Ovary (tissue), 10 donors: ENCODE measurements at regions of chr20 and their contacts with region 1.

Region 1: DNA sequence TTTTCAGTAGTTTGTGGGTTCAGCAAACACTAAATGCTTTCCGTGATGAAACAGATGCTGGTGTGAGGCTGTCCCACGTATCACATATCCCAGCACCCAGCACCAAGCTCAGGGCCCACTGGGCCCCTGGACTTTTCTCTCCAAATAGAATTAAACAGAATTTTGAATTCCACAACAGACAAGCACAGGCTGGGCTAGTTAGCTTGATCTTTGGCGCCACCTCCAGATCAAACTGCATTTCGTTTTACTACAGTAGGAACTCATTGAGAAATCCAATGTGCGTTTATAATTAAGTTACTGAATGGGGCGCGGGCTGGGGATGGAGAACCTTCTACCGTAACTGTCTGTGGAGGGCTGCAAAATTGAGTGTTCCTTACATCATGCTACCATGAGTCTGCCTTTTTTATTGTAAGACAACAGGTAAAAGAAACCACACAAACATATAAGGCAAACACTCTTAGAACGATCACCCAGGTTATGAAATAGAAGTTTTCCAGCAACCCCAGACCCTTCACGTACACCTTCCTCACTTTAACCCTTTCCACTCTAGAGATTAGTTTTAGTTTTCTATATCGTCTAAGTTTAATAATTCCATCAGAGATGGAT is 107.8 kb downstream of the ZFP64 start:
- DNase-seq: peak; percentile 54 to 69 (median 61)
- H3K4me3 ChIP-seq: no peak overlapping the region
- H3K27ac ChIP-seq: no peak overlapping the region
- H3K4me1 ChIP-seq: no peaks in the 10 kb centered on the region
- H3K27me3 ChIP-seq: no peaks in the 10 kb centered on the region
- CTCF ChIP-seq: peak in 2 of 3 donors; percentile 21 to 46
- EP300 ChIP-seq: no peak
- POLR2A ChIP-seq: no peak

Region 2: DNA sequence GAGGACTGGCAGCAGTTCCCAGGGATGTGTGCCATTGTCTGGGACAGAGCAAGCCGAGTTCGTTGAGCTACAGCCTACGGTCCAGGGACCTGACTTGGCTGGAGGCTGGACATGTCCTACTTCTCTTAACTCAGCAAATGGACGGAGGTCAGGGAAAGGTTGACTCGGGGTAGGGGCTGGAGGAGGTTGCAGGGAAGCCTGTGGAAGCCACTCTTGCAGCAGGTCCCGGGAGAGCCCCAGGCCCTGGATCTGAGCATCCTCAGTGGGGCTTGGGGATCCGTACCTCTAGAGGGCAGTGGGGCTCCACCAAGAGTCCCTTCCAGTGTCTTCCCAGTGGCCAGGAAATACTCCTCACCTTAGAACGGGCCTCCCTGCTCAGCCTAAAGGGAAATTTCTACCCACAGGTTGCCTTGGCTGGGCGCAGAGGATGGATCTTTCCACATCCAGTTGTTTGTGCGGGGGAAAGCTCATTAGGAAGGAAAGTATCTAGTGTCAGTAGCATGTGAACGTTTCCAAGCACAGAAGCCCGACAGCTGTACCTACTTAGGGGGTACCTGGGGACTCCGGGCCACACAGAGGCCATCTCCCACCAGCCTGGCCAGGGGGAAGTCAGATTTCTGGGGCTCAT is 711.4 kb before region 1 on chr20:
- intact Hi-C with region 1: loop called in 1 of 4 experiments (anchors 10 kb)
- DNase-seq: peak; percentile 68 to 82 (median 74)
- H3K4me3 ChIP-seq: no peak overlapping the region
- H3K27ac ChIP-seq: no peak overlapping the region
- H3K4me1 ChIP-seq: peaks cover 3% of the 10 kb centered on the region
- H3K27me3 ChIP-seq: no peaks in the 10 kb centered on the region
- CTCF ChIP-seq: peak; percentile 54 to 79 (median 77)
- EP300 ChIP-seq: no peak
- POLR2A ChIP-seq: no peak

Region 3: GRCh38 chr20:51639206-51639832 is 444.4 kb before region 1 on chr20:
- intact Hi-C with region 1: loop called in 2 of 4 experiments (anchors 5 to 10 kb)
- DNase-seq: peak; percentile 57 to 83 (median 77)
- H3K4me3 ChIP-seq: no peak overlapping the region
- H3K27ac ChIP-seq: no peak overlapping the region
- H3K4me1 ChIP-seq: no peaks in the 10 kb centered on the region
- H3K27me3 ChIP-seq: no peaks in the 10 kb centered on the region
- CTCF ChIP-seq: peak; percentile 69 to 78 (median 75)
- EP300 ChIP-seq: no peak
- POLR2A ChIP-seq: no peak

Region 4: GRCh38 chr20:51647674-51648570 is 435.8 kb before region 1 on chr20:
- intact Hi-C with region 1: loop called in 2 of 4 experiments (anchors 5 to 10 kb)
- DNase-seq: no peak
- H3K4me3 ChIP-seq: no peak overlapping the region
- H3K27ac ChIP-seq: no peak overlapping the region
- H3K4me1 ChIP-seq: no peaks in the 10 kb centered on the region
- H3K27me3 ChIP-seq: no peaks in the 10 kb centered on the region
- CTCF ChIP-seq: no peak
- EP300 ChIP-seq: no peak
- POLR2A ChIP-seq: no peak

Region 5: DNA sequence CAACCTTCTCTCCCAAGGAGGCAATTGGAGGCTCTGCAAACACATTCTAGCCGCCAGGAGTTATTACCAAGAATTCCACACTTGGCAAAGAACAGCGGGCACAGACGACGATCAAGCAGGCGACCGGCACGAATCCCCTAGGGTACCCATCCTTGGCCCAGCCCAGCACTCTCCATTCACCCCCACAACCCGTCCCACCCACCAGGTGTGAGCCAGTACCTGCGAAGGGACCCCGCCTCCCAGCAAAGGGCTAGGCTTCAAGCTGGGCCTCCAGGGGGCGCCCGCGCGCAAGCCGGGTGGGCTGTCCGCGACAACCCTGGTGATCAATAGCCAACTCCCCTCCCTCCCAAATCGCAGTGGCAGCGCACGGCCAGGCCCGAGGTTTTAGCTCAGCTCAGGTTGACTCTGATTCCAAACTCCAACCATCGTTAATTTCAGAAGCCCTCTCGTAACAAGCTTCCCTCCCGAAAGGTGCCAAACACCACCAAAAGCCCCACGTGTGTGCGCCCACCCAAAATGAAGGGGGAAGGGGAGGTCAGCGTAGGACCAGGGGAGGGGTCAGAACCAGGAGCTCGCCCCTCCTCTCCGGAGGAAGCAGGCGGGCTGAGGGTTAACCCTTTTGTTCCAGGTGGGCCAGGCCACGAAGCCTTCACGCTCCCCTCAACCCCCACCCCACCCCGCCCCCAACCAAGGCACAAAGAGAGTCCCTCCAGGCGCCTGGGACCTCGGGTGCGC is 283.5 kb before region 1 on chr20:
- intact Hi-C with region 1: loop called in 1 of 4 experiments (anchors 10 kb)
- DNase-seq: peak; percentile 13 to 67 (median 40)
- H3K4me3 ChIP-seq: no peak overlapping the region
- H3K27ac ChIP-seq: no peak overlapping the region
- H3K4me1 ChIP-seq: peaks cover 5% of the 10 kb centered on the region
- H3K27me3 ChIP-seq: no peaks in the 10 kb centered on the region
- CTCF ChIP-seq: peak in 1 of 3 donors; percentile 19
- EP300 ChIP-seq: no peak
- POLR2A ChIP-seq: no peak

Region 6: GRCh38 chr20:52179331-52180179 is 95.8 kb after region 1 on chr20:
- intact Hi-C with region 1: no loop called
- DNase-seq: no peak
- H3K4me3 ChIP-seq: no peak overlapping the region
- H3K27ac ChIP-seq: no peak overlapping the region
- H3K4me1 ChIP-seq: no peaks in the 10 kb centered on the region
- H3K27me3 ChIP-seq: no peaks in the 10 kb centered on the region
- CTCF ChIP-seq: no peak
- EP300 ChIP-seq: no peak
- POLR2A ChIP-seq: no peak